Activated CD4-positive, alpha-beta memory T cell treated with anti-CD3 and anti-CD28 coated beads for 36 hours (primary cell): ENCODE measurements at regions of chr14 and their contacts with region 1.

Region 1: DNA sequence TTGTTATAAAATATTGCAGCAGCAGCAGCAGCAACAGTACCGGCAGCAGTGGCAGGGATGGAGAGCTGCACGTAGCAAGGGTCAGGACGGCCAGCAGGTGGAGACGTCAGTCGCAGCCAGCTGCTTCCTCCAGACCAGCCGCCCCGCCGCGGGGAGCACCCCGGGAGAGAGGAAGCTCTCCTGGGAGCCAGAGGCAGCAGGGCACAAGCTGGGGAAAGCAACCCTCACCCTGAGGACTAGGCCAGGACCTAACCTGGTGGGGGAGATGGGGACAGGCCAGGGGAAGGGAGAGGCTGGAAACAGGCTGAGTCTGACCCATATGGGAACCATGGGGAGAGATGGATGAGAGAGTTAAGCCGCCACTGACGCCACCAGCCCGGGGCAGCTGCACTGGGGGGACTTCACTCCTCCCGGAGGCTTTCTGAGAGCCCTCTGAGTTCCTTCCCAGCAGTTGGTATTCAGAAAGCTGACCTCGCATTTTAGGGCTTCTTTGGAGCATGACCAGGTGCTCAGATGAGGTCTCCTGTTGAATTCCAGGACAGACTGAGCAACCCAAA is 56.3 kb downstream of the SPTB start:
- DNase-seq: peak; percentile 80
- H3K4me3 Mint-ChIP-seq: no peak overlapping the region
- H3K27ac Mint-ChIP-seq: no peak overlapping the region
- H3K4me1 Mint-ChIP-seq: no peaks in the 10 kb centered on the region
- H3K27me3 Mint-ChIP-seq: peaks cover 4% of the 10 kb centered on the region

Region 2: DNA sequence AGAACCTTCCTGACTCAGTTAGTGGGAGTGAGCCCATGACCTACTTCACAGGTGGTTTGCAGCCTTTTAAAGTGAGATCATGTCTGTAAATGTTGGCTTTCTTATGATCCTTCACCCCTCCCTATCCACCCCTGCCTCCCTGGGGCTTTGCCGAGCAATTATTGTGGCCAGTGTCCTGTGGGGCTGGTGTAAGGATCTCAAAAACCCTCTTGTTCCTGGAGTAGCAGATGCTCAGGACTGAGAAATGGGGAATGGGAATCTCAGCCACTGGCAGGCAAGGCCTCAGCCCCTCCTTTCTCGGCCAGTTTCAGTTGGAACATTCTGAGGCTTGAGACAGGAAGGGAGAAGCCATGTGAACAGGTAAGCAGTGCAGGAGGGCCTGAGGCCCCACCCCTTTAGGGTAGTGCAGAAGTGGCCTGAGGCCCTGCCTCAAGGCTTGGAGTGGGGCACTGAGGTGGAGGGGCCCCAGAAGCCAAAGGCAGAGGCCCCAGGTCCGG is 65.3 kb before region 1 on chr14:
- CTCF ChIA-PET with region 1: no interaction called
- POLR2A ChIA-PET with region 1: no interaction called
- intact Hi-C with region 1: no loop called
- DNase-seq: no peak
- H3K4me3 Mint-ChIP-seq: no peak overlapping the region
- H3K27ac Mint-ChIP-seq: no peak overlapping the region
- H3K4me1 Mint-ChIP-seq: peaks cover 78% of the 10 kb centered on the region
- H3K27me3 Mint-ChIP-seq: no peaks in the 10 kb centered on the region

Region 3: GRCh38 chr14:64800000-64800399 is 23.4 kb before region 1 on chr14:
- CTCF ChIA-PET with region 1: interaction called, 16 read pairs
- POLR2A ChIA-PET with region 1: no interaction called
- intact Hi-C with region 1: no loop called
- DNase-seq: peak; percentile 16
- H3K4me3 Mint-ChIP-seq: no peak overlapping the region
- H3K27ac Mint-ChIP-seq: no peak overlapping the region
- H3K4me1 Mint-ChIP-seq: no peaks in the 10 kb centered on the region
- H3K27me3 Mint-ChIP-seq: no peaks in the 10 kb centered on the region

Region 4: GRCh38 chr14:64812217-64812811 is 11.1 kb before region 1 on chr14:
- CTCF ChIA-PET with region 1: interaction called, 22 read pairs
- POLR2A ChIA-PET with region 1: no interaction called
- intact Hi-C with region 1: no loop called
- DNase-seq: peak; percentile 63
- H3K4me3 Mint-ChIP-seq: no peak overlapping the region
- H3K27ac Mint-ChIP-seq: no peak overlapping the region
- H3K4me1 Mint-ChIP-seq: peaks cover 6% of the 10 kb centered on the region
- H3K27me3 Mint-ChIP-seq: peaks cover 1% of the 10 kb centered on the region

Region 5: GRCh38 chr14:64880221-64881121 is 57.1 kb after region 1 on chr14:
- CTCF ChIA-PET with region 1: interaction called, 17 read pairs
- POLR2A ChIA-PET with region 1: no interaction called
- intact Hi-C with region 1: no loop called
- DNase-seq: peak; percentile 74
- H3K4me3 Mint-ChIP-seq: peak overlapping the region; percentile 77
- H3K27ac Mint-ChIP-seq: no peak overlapping the region
- H3K4me1 Mint-ChIP-seq: peaks cover 8% of the 10 kb centered on the region
- H3K27me3 Mint-ChIP-seq: peaks cover 29% of the 10 kb centered on the region

Region 6: GRCh38 chr14:64914237-64914971 is 91.0 kb after region 1 on chr14 and contains the start of gene CHURC1:
- CTCF ChIA-PET with region 1: interaction called, 12 read pairs
- POLR2A ChIA-PET with region 1: no interaction called
- intact Hi-C with region 1: no loop called
- DNase-seq: peak; percentile 98
- H3K4me3 Mint-ChIP-seq: peak within 1 kb of the TSS; percentile 78
- H3K27ac Mint-ChIP-seq: peak within 1 kb of the TSS; percentile 90
- H3K4me1 Mint-ChIP-seq: peaks cover 44% of the 10 kb centered on the region
- H3K27me3 Mint-ChIP-seq: peaks cover 3% of the 10 kb centered on the region
- total RNA-seq, gene CHURC1: 61.7 to 62.6 TPM